Endothelial cell of umbilical vein (primary cell): ENCODE measurements at regions of chr18 and their contacts with region 1.

Region 1: DNA sequence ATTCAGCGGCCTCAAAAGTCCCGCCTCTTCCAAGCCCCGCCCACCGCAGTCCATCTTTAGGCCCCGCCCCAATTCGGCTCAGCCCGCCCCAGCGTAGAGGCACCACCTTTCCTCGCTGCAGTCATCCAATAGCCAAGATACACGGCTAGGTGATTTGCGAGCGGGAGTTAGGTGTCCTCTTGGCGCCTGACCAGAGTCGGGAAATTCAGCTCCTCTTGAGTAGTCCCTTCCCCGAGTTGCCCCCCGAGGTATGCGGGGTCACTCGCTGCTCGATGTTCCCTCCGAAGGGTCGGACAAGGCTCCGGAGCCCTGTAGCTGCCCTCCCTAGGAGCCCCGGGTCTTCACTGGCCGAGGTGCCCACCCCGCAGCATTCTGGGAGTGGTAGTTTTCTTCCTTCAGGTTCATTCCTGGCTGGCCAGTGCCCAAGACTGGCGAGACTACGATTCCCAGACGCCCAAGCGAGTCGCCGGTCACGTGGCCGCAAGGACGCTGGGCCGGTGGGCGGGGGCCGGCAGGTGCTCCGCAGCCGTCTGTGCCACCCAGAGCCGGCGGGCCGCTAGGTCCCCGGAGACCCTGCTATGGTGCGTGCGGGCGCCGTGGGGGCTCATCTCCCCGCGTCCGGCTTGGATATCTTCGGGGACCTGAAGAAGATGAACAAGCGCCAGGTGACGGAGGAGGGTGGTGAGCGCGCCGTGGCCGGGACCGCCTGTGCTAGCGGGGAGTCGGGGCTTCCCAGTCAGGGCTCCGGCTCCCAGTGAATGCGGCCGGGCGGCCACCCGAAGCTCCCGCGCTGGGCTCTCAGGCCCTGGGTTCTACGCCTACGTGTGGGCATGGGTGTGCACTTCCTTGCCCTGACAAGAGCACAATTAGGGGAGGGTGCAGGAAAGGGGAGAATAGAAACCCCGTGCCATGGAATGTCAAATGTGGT is at the start of gene SEC11C:
- DNase-seq: peak; percentile 99
- H3K4me3 ChIP-seq: peak within 1 kb of the TSS; percentile 39 to 79 (median 50)
- H3K27ac ChIP-seq: peak within 1 kb of the TSS; percentile 67
- H3K4me1 ChIP-seq: peaks cover 5% of the 10 kb centered on the region
- H3K27me3 ChIP-seq: peaks cover 1 to 8% of the 10 kb centered on the region in 2 experiments
- CTCF ChIP-seq: no peak
- POLR2A ChIP-seq: no peak
- total RNA-seq, gene SEC11C: 29.8 and 36.8 TPM in 2 replicates

Region 2: DNA sequence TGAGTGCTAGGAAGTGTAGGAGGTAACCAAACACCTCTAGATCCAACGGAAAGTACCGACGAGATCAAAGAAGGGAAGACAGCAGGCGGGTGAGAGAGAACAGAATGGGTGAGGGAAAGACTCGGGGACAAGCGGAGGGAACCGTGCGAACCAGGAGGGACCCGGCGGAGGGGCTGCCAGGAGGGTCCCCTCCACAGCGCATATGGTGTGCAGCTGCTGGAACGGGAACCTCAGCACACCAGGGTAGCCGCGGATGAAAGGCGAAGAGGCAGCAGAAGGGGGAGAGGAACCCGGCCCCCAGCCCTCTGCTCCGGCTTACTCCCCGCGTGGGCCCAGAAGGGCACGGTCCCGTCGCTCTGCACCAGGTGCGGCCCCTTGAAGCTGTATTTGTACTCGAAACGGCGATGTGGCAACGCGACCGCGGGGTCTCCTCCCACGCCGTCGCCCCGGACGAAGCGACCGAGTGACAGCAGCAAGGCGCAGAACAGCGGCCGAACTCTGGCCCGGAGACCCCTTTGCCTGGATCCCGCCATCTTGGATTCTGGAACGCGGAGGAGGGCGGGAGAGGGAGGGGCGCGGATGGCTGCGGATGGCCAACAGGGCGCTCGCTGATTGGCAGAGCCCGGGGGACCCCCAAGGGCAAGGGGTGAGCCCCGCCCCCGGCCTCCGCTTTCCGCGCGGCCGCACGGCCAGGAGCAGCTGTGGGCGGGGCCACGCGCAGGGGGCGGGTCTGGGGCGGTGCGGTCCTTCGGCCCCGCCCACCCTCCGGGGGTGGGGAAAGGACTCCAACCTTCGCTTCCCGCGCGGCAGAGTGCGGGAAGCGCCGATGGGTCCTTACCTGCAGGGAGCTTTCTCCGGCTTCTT is 219.3 kb after region 1 on chr18 and contains the start of gene LMAN1:
- CTCF ChIA-PET with region 1: no interaction called
- POLR2A ChIA-PET with region 1: no interaction called
- dilution Hi-C with region 1: no loop called
- intact Hi-C with region 1: loop called (anchors 2 kb)
- DNase-seq: peak; percentile 93
- H3K4me3 ChIP-seq: peak within 1 kb of the TSS; percentile 88 to 94 (median 89)
- H3K27ac ChIP-seq: peak within 1 kb of the TSS; percentile 73
- H3K4me1 ChIP-seq: peaks cover 18% of the 10 kb centered on the region
- H3K27me3 ChIP-seq: peaks cover 22 to 38% of the 10 kb centered on the region in 2 experiments
- CTCF ChIP-seq: no peak
- POLR2A ChIP-seq: peak; percentile 79
- total RNA-seq, gene LMAN1: 92.5 and 98.3 TPM in 2 replicates